Activated naive CD4-positive, alpha-beta T cell treated with anti-CD3 and anti-CD28 coated beads for 36 hours (primary cell): ENCODE measurements at regions of chr12 and their contacts with region 1.

Region 1: DNA sequence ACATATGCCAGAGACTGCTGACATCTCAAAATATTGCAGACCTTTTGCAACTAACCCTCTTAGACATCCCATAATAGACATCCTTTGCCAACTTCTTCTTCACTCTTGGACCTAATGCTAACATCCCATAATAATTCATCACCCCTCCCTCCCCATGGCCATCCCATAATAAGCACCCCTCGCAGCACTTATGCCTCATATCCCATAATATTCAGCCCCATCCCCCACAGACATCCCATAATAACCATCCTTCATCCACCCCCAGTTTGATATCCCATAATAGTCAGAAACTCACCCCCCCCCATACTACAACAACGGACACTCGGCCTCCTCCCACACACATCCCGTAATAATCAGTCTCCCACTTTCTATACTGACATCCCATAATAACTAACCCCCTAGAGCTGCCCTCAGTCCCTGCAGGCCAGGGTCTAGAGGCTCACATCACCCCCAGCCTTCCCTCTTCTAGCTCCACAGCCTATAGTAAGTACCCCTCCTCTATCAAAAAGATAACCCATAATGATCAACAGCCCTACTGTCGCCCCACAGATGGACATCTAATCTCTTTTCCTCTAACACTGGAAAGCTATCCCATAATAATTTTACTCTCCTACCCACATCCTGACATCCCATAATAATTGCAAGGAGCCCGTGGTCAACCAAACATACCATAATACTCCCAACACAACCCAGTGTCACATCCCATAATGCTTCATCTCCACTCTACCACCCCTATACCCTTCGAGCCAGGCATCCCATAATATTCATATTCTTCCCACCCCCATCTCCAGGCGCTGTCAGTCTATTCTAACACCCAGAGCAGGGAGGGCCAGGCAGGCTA is 792 bp upstream of the CHD4 start:
- DNase-seq: peak; percentile 79
- H3K4me3 Mint-ChIP-seq: no peak overlapping the region
- H3K27ac Mint-ChIP-seq: no peak overlapping the region
- H3K4me1 Mint-ChIP-seq: peaks cover 55% of the 10 kb centered on the region
- H3K27me3 Mint-ChIP-seq: no peaks in the 10 kb centered on the region

Region 2: GRCh38 chr12:6430124-6430989 is 177.6 kb before region 1 on chr12:
- CTCF ChIA-PET with region 1: no interaction called
- intact Hi-C with region 1: loop called (anchors 5 kb)
- DNase-seq: peak; percentile 78
- H3K4me3 Mint-ChIP-seq: peak overlapping the region; percentile 46
- H3K27ac Mint-ChIP-seq: peak overlapping the region; percentile 84
- H3K4me1 Mint-ChIP-seq: peaks cover 85% of the 10 kb centered on the region
- H3K27me3 Mint-ChIP-seq: no peaks in the 10 kb centered on the region

Region 3: DNA sequence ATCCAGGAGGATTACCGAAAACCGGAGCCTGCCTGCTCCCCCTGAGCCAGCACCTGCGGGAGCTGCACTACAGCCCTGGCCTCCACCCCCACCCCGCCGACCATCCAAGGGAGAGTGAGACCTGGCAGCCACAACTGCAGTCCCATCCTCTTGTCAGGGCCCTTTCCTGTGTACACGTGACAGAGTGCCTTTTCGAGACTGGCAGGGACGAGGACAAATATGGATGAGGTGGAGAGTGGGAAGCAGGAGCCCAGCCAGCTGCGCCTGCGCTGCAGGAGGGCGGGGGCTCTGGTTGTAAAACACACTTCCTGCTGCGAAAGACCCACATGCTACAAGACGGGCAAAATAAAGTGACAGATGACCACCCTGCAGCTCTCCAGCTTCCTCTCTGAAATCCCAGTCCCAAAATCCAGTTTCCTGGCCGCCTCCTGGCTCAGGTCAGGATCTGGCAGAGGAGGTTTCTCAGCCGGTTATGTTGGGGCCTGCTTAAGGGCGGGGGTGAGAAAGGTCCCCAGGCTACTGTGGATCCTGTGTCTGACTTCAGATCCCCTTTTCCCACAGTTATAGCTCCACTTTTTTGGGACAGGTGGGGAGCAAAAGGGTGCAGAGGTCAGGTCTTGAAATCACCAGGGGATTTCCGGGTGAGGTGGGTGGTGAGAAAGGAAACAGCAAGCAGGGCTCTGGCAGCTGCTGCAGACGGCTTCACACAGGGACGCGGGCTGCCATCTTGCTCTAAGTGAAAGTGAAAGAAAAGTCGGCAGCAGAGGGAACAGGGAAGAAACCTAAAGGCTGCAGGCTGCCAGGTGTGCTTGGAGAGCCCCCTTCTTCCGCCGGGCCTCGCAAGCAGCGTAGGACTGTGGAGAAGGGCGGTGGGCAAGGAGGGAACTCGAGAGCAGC is 156.4 kb before region 1 on chr12 and contains the start of gene TAPBPL:
- CTCF ChIA-PET with region 1: no interaction called
- intact Hi-C with region 1: no loop called
- DNase-seq: peak; percentile 93
- H3K4me3 Mint-ChIP-seq: peak within 1 kb of the TSS; percentile 98
- H3K27ac Mint-ChIP-seq: peak within 1 kb of the TSS; percentile 98
- H3K4me1 Mint-ChIP-seq: peaks cover 65% of the 10 kb centered on the region
- H3K27me3 Mint-ChIP-seq: no peaks in the 10 kb centered on the region
- total RNA-seq, gene TAPBPL: 27.9 to 28.0 TPM

Region 4: DNA sequence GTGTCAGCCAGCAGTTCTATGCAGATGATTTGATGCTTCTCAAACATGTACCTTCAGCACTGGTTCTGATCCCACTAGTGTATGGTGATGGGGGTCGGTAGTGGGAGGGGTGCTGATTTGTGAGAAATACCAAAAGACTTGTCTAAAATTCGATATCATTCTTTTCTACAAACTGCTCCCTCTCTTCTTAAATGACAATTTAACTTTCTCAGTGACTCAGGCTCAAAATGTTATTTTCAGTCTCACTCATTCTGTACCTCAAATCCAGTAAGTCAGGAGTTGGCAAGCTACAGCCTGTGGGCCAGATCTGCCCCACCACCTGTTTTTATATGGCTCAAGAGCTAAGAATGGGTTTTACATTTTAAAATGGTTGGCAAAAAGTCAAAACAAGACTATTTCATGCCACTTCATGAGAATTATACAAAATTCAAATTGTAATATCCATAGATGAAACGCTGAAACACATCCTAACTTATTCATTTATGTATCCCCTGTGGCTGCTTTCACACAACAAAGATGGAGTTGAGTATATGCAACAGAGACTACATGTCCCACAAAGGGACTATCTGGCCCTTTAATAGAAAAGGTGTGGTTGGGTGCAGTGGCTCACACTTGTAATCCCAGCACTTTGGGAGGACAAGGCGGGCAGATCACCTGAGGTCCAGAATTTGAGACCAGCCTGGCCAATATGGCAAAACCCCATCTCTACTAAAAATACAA is 33.2 kb before region 1 on chr12:
- CTCF ChIA-PET with region 1: interaction called, 8 read pairs
- intact Hi-C with region 1: loop called (anchors 2 kb)
- DNase-seq: peak; percentile 59
- H3K4me3 Mint-ChIP-seq: no peak overlapping the region
- H3K27ac Mint-ChIP-seq: peak overlapping the region; percentile 87
- H3K4me1 Mint-ChIP-seq: peaks cover 45% of the 10 kb centered on the region
- H3K27me3 Mint-ChIP-seq: no peaks in the 10 kb centered on the region

Region 5: GRCh38 chr12:6662906-6663742 is 55.2 kb after region 1 on chr12 and contains the start of gene ING4:
- CTCF ChIA-PET with region 1: interaction called, 4 read pairs
- intact Hi-C with region 1: loop called (anchors 1 kb)
- DNase-seq: peak; percentile 99
- H3K4me3 Mint-ChIP-seq: peak within 1 kb of the TSS; percentile 86
- H3K27ac Mint-ChIP-seq: peak within 1 kb of the TSS; percentile 88
- H3K4me1 Mint-ChIP-seq: peaks cover 25% of the 10 kb centered on the region
- H3K27me3 Mint-ChIP-seq: no peaks in the 10 kb centered on the region
- total RNA-seq, gene ING4: 17.3 to 17.8 TPM

Region 6: GRCh38 chr12:6697584-6698351 is 89.8 kb after region 1 on chr12:
- CTCF ChIA-PET with region 1: no interaction called
- intact Hi-C with region 1: no loop called
- DNase-seq: peak; percentile 50
- H3K4me3 Mint-ChIP-seq: no peak overlapping the region
- H3K27ac Mint-ChIP-seq: no peak overlapping the region
- H3K4me1 Mint-ChIP-seq: peaks cover 8% of the 10 kb centered on the region
- H3K27me3 Mint-ChIP-seq: peaks cover 27% of the 10 kb centered on the region

Region 7: DNA sequence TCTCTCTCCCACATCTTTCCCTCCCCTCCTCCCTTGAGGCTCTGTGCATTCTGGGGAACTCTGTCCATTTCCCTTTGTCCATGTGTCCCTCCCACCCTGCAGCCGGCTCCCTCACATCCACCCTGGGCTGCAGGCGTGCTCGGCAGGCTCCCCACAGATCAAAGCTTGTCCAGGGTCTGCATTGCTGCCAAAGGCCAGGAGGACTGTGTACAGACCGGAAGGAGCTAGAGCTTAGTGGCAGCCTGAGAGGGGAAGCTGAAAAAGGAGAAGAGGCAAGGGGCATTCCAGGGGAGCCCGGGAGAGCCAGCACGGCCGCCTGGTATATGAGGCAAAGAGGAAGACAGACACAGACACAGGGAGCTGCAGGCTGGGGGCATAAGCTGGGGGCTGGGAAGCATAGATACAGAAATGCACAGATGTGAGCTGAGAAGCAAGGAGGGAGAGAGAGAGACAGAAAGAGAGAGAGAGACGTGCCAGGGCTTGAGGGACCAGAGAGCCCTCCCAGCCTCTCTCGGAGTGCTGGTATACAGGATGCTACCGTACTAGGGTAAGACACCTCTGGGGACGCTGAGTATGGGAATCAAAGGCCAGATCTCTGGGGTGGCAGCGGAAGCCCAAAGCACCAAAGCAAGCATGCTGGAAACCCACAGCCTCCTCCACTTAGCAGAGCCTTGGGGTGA is 184.7 kb after region 1 on chr12:
- CTCF ChIA-PET with region 1: no interaction called
- intact Hi-C with region 1: loop called (anchors 5 kb)
- DNase-seq: peak; percentile 61
- H3K4me3 Mint-ChIP-seq: peak overlapping the region; percentile 97
- H3K27ac Mint-ChIP-seq: peak overlapping the region; percentile 96
- H3K4me1 Mint-ChIP-seq: peaks cover 51% of the 10 kb centered on the region
- H3K27me3 Mint-ChIP-seq: no peaks in the 10 kb centered on the region

Region 8: GRCh38 chr12:7303230-7303629 is 695.3 kb after region 1 on chr12:
- CTCF ChIA-PET with region 1: no interaction called
- intact Hi-C with region 1: no loop called
- DNase-seq: no peak
- H3K4me3 Mint-ChIP-seq: no peak overlapping the region
- H3K27ac Mint-ChIP-seq: no peak overlapping the region
- H3K4me1 Mint-ChIP-seq: no peaks in the 10 kb centered on the region
- H3K27me3 Mint-ChIP-seq: peaks cover 2% of the 10 kb centered on the region